Cardiac septum (tissue), 1 donor: ENCODE measurements at regions of chr7 and their contacts with region 1.

Region 1: DNA sequence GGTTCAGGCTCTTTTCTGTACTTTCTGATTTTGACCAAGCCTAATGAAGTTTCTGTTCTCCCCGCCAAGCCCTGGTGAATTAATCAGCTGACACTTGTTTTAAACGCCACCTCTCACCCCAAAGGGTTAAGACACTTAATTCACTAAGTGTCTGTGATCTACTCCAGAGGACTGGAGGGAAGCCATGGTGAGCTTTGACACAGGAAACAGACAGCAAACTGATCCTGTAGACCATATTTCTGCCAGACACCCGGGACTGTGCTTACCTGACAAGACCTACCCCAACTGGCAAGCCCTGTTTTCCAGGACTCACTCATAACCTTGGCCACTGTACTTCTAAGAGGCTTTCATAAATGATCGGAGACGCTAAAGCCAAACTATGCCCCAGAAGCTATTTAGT is 126.0 kb downstream of the STRA8 start:
- DNase-seq: no peak

Region 2: GRCh38 chr7:135342887-135343286 is 16.7 kb before region 1 on chr7:
- intact Hi-C with region 1: loop called (anchors 1 kb)
- DNase-seq: no peak